ENCODE measurements at regions of chr20 and their contacts with region 1.

Region 1: DNA sequence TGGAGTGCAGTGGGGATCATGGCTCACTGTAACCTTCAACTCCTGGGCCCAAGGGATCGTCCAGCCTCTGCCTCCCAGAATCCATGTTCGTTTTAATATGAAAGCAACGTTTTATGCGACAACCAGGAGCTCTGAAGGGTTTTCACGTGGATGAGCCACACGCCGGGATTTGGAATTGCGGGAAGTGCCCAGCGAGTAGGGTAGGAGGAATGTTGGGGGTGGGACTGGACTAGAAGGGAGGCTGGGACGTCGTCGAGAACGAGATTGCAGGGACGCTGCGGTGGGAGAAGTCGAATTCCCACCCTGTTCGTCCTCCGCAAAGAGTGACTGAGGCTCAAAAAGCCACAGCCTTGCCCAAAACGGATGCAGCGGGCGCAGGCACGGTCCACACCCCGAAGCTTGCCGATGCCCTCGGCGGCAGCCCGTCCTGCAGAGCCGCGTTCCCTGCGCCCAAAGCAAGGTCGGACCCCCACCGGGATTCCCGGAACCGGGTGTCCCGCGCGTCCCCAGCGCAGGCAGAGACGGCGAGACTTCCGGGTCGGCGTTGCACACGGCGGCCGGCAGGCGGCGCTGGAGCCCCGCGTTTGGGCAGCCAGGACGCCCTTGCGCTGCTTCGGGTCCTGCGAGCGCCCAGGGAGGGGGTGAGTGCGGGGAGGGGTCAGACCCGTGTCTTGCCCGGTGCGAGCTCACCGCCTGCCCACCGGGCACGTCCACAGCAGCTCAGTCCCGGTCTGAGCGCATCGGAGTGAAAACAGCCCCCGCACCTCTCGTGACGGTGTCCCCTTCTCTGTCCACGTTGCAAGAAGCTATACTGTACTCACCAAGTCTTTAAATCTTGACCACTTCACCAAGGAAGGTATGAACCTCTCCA is 87.8 kb downstream of the DHX35 start:
- DNase-seq: peak; percentile 75
- ATAC-seq: peak; percentile 86
- H3K4me3 ChIP-seq: peak overlapping the region; percentile 63 to 89 (median 76)
- H3K27ac ChIP-seq: no peak overlapping the region
- H3K4me1 ChIP-seq: peaks cover 22% of the 10 kb centered on the region
- H3K27me3 ChIP-seq: peaks cover 0 to 7% of the 10 kb centered on the region in 2 experiments; a peak in 2 of 5 replicates
- CTCF ChIP-seq: peak; percentile 100
- EP300 ChIP-seq: 0 out of 4 replicates have a peak, but pooled peaks of 1 of the 2 experiments have one; percentile 52
- POLR2A ChIP-seq: peak; percentile 70 to 75; a peak in 3 of 4 replicates
- RAD21 ChIP-seq: peak; percentile 99

Region 2: GRCh38 chr20:38645980-38646858 is 403.7 kb before region 1 on chr20:
- CTCF ChIA-PET with region 1: no interaction called
- POLR2A ChIA-PET with region 1: no interaction called
- in situ Hi-C with region 1: loop called (anchors 25 kb)
- intact Hi-C with region 1: loop called (anchors 5 kb)
- DNase-seq: peak; percentile 71
- ATAC-seq: peak; percentile 87
- H3K4me3 ChIP-seq: peak overlapping the region in 1 of 3 experiments; percentile 42; a peak in 1 of 6 replicates
- H3K27ac ChIP-seq: no peak overlapping the region
- H3K4me1 ChIP-seq: peaks cover 25% of the 10 kb centered on the region
- H3K27me3 ChIP-seq: peaks cover 2 to 17% of the 10 kb centered on the region in 2 experiments; a peak in 3 of 5 replicates
- CTCF ChIP-seq: peak; percentile 100
- EP300 ChIP-seq: peak in 1 of 2 experiments; percentile 64; a peak in 1 of 4 replicates
- POLR2A ChIP-seq: no peak
- RAD21 ChIP-seq: peak; percentile 99

Region 3: GRCh38 chr20:38919683-38920082 is 130.2 kb before region 1 on chr20:
- CTCF ChIA-PET with region 1: interaction called, 21 read pairs
- POLR2A ChIA-PET with region 1: no interaction called
- in situ Hi-C with region 1: loop called (anchors 5 kb)
- intact Hi-C with region 1: no loop called
- DNase-seq: no peak
- ATAC-seq: no peak
- H3K4me3 ChIP-seq: no peak overlapping the region
- H3K27ac ChIP-seq: no peak overlapping the region
- H3K4me1 ChIP-seq: peaks cover 43% of the 10 kb centered on the region
- H3K27me3 ChIP-seq: peaks cover 7 to 23% of the 10 kb centered on the region in 2 experiments; a peak in 4 of 5 replicates
- CTCF ChIP-seq: no peak
- EP300 ChIP-seq: no peak
- POLR2A ChIP-seq: no peak
- RAD21 ChIP-seq: no peak

Region 4: DNA sequence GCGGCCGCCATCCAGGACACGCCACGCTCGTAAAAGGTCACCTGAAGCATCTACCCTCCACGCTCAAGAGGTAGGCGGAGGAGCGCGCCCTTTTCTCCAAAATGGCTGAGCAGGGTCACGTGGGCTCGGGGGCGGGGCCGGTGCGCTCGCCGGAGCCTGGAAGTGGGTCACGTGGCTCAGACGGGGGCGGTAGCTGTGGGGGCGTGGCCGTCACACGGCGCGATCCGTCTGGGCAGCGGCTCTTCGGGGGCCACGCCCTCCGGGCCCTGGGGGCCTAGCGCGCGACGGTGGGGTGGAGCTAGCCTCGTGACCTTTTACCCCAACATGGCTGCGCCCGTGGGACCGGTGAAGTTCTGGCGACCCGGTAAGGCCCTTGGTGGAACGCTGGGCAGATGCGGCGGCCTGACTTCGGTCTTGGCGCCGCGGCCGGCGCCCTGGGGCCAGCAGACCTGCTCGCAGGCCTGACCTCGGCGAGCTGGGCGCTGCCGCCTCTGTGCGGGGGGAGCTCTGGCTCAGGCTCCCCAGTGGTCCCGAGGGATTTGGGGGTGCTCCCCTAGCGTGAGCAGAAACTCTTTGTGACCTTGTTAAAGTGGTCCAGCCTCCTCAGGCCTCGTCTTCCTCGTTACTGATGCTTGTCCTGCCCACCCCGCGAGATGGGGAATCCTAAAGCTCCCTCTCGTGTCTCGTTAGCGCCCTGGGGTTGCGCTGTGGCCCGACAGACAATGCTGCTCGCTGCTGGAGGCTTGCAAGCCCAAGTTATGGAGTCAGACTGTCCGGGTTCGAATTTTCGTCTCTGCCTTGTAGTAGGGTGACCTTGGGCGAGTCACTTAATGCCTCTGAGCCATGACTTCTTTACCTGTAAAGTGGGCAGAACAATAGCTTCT is 87.6 kb before region 1 on chr20 and contains the start of gene DHX35:
- CTCF ChIA-PET with region 1: no interaction called
- POLR2A ChIA-PET with region 1: interaction called, 20 read pairs
- in situ Hi-C with region 1: no loop called
- intact Hi-C with region 1: loop called (anchors 10 kb)
- DNase-seq: peak; percentile 97
- ATAC-seq: peak; percentile 98
- H3K4me3 ChIP-seq: peak within 1 kb of the TSS; percentile 86 to 95 (median 95)
- H3K27ac ChIP-seq: peak within 1 kb of the TSS; percentile 89
- H3K4me1 ChIP-seq: peaks cover 34% of the 10 kb centered on the region
- H3K27me3 ChIP-seq: no peaks in the 10 kb centered on the region; a peak in 1 of 5 replicates
- CTCF ChIP-seq: peak; percentile 86
- EP300 ChIP-seq: peak in 1 of 2 experiments; percentile 14; a peak in 2 of 4 replicates
- POLR2A ChIP-seq: peak; percentile 79 to 96
- RAD21 ChIP-seq: peak; percentile 74
- total RNA-seq, gene DHX35: 28.7 and 30.4 TPM in 2 replicates

Region 5: GRCh38 chr20:39075731-39076130 is 25.8 kb after region 1 on chr20:
- CTCF ChIA-PET with region 1: interaction called, 96 read pairs
- POLR2A ChIA-PET with region 1: interaction called, 11 read pairs
- in situ Hi-C with region 1: loop called (anchors 5 kb)
- intact Hi-C with region 1: no loop called
- DNase-seq: no peak
- ATAC-seq: no peak
- H3K4me3 ChIP-seq: no peak overlapping the region
- H3K27ac ChIP-seq: no peak overlapping the region
- H3K4me1 ChIP-seq: peaks cover 12% of the 10 kb centered on the region
- H3K27me3 ChIP-seq: peaks cover 3 to 50% of the 10 kb centered on the region in 2 experiments; a peak in 4 of 5 replicates
- CTCF ChIP-seq: no peak
- EP300 ChIP-seq: no peak
- POLR2A ChIP-seq: no peak
- RAD21 ChIP-seq: no peak

Region 6: DNA sequence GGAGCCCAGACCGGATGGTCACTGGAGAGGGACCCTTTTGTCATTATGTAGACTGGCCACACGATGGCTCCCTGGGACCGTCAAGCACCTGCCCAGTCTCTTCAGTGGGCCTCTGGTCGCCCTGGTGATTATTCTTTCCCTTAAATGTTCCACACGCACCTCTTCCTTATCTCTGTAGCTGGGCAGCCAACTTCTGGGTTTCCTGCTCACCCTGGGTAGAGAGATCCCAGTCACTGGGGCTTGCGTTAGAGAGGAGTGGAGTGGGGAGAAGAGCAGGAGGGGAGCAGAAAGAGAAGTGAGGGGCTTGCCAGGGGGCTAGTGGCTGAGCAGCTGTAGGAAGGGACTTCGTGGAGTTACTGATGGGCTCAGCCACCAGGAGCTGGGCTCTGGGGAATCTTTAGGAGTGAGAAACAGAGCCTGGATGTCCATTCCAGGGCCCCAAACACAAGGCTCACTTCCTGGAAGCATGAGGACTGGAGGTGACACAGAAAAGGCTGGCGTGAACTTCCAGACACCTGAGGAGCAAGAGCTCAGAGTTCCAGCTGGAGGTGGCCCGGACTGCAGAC is 62.3 kb after region 1 on chr20:
- CTCF ChIA-PET with region 1: no interaction called
- POLR2A ChIA-PET with region 1: no interaction called
- in situ Hi-C with region 1: no loop called
- intact Hi-C with region 1: loop called (anchors 2 kb)
- DNase-seq: peak; percentile 65
- ATAC-seq: peak; percentile 97
- H3K4me3 ChIP-seq: peak overlapping the region in 1 of 3 experiments; percentile 6; a peak in 1 of 6 replicates
- H3K27ac ChIP-seq: no peak overlapping the region
- H3K4me1 ChIP-seq: peaks cover 15% of the 10 kb centered on the region; the same call in 1 of the 2 replicates
- H3K27me3 ChIP-seq: peaks cover 4 to 23% of the 10 kb centered on the region in 2 experiments; a peak in 3 of 5 replicates
- CTCF ChIP-seq: peak; percentile 96
- EP300 ChIP-seq: no peak
- POLR2A ChIP-seq: no peak
- RAD21 ChIP-seq: peak; percentile 90

Region 7: GRCh38 chr20:39661833-39662232 is 611.9 kb after region 1 on chr20:
- CTCF ChIA-PET with region 1: no interaction called
- POLR2A ChIA-PET with region 1: no interaction called
- in situ Hi-C with region 1: no loop called
- intact Hi-C with region 1: no loop called
- DNase-seq: no peak
- ATAC-seq: no peak
- H3K4me3 ChIP-seq: no peak overlapping the region
- H3K27ac ChIP-seq: no peak overlapping the region
- H3K4me1 ChIP-seq: no peaks in the 10 kb centered on the region
- H3K27me3 ChIP-seq: no peaks in the 10 kb centered on the region
- CTCF ChIP-seq: no peak
- EP300 ChIP-seq: no peak
- POLR2A ChIP-seq: no peak
- RAD21 ChIP-seq: no peak

Measured in HepG2 (cell line).